ENCODE measurements at regions of chr17 and their contacts with region 1.

Region 1: GRCh38 chr17:81253358-81254131 is 14.4 kb downstream of the NDUFAF8 start:
- ATAC-seq: peak in 4 of 8 experiments; percentile 12 to 28 (median 14)
- H3K4me3 ChIP-seq: no peak overlapping the region
- H3K27ac ChIP-seq: peak overlapping the region; percentile 30 to 64
- H3K4me1 ChIP-seq: peaks cover 38 to 53% of the 10 kb centered on the region in 2 donors

Region 2: DNA sequence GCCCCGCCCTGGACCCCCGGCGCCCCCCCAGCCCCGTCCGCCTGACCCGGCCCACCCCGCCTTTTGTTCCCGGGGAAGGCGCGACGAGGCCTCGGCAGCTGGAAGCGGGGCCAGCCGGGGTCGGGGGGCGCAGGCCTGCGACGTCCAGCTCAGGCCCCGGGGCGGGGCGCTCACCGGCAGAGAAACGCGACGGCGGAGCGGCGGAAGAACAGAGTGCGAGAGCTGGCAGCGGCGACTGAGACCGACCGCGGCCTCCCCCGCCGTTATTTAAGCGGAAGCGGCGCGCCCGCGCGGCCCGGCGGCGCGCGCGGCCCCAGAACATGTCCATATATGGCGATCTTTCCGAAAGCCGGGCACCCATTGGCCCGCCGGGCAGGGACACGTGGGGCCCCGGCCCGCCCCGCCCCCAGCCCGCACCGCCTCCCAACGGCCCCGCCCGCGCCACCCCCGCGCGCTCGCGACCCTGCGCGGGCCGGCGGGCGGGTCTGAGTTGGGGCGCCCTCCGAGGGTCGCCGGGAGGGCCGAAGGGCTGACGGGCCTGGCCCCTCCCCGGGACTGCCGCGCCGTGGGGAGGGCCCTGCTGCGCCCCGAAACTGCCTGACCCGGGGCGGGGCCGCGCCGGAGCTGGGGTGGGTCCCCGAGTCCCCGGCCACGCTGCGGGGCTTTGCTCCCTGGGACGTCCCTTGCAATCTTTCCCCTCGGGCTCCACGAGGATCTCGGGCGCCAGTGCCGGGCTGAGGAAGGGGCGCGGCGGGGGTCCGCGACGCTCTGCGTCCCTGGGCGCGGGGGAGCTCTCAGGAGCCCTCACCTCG is 259.2 kb after region 1 on chr17 and contains the start of gene ACTG1:
- in situ Hi-C with region 1: loop called in 1 of 9 experiments (anchors 25 kb)
- ATAC-seq: peak; percentile 7 to 65 (median 56)
- H3K4me3 ChIP-seq: peak within 1 kb of the TSS; percentile 63 to 98 (median 93)
- H3K27ac ChIP-seq: peak within 1 kb of the TSS; percentile 99
- H3K4me1 ChIP-seq: peaks cover 28 to 32% of the 10 kb centered on the region in 2 donors
- total RNA-seq, gene ACTG1: 2,076 to 6,877 (median 3,447) TPM

Region 3: GRCh38 chr17:81566461-81567126 is 313.0 kb after region 1 on chr17:
- in situ Hi-C with region 1: no loop called
- ATAC-seq: peak in 6 of 8 experiments; percentile 51 to 91 (median 76)
- H3K4me3 ChIP-seq: no peak overlapping the region
- H3K27ac ChIP-seq: no peak overlapping the region
- H3K4me1 ChIP-seq: no peaks in the 10 kb centered on the region

Measured in motor neuron (in vitro differentiated cells).